B cell (primary cell): ENCODE measurements at regions of chr2 and their contacts with region 1.

Region 1: GRCh38 chr2:208189810-208190503 is at the start of gene C2orf80:
- DNase-seq: no peak
- ATAC-seq: no peak
- H3K4me3 ChIP-seq: no peak within 1 kb of the TSS
- H3K4me3 Mint-ChIP-seq: no peak within 1 kb of the TSS
- H3K27ac ChIP-seq: no peak within 1 kb of the TSS
- H3K27ac Mint-ChIP-seq: no peak within 1 kb of the TSS
- H3K4me1 ChIP-seq: no peaks in the 10 kb centered on the region
- H3K4me1 Mint-ChIP-seq: no peaks in the 10 kb centered on the region
- H3K27me3 ChIP-seq: no peaks in the 10 kb centered on the region
- H3K27me3 Mint-ChIP-seq: peaks cover 9% of the 10 kb centered on the region
- CTCF ChIP-seq: no peak
- total RNA-seq, gene C2orf80: not detected in 2 replicates

Region 2: DNA sequence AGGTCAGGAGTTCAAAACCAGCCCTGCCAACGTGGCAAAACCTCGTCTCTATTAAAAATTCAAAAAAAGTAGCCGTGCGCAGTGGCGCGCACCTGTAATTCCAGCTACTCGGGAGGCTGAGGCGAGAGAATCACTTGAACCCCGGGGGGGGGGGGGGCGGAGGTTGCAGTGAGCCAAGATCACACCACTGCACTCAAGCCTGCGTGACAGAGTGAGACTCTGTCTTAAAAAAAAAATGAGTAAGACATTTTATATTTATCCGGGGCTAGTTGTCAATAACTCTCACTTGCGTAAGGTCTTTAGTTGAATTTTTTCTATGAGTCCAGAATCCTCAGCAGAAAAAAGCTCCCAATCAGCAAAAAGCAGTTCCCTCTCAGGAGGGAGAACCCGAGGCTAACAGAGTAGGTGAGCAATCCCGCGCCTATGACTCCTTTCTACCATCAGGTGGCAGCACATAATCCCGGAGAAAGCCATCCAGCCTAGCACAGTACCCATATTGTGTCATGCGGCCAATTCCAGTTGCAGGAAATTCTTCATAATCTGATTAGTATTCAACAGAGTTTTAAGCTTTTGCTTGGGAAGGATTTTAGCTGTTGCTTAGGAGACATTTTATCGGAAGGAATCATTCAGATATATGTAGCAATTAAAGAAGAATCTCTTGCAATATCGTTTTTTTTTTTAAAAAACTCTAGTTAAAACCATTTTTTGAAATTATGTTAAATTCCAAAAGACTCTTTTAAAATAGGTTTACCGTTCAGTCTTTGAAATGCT is 14.7 kb before region 1 on chr2:
- CTCF ChIA-PET with region 1: interaction called, 12 read pairs
- POLR2A ChIA-PET with region 1: no interaction called
- intact Hi-C with region 1: no loop called
- DNase-seq: peak; percentile 68
- ATAC-seq: peak; percentile 90
- H3K4me3 ChIP-seq: no peak overlapping the region
- H3K4me3 Mint-ChIP-seq: no peak overlapping the region
- H3K27ac ChIP-seq: no peak overlapping the region
- H3K27ac Mint-ChIP-seq: no peak overlapping the region
- H3K4me1 ChIP-seq: no peaks in the 10 kb centered on the region
- H3K4me1 Mint-ChIP-seq: peaks cover 3% of the 10 kb centered on the region
- H3K27me3 ChIP-seq: peaks cover 0 to 5% (median 0%) of the 10 kb centered on the region in 4 experiments
- H3K27me3 Mint-ChIP-seq: peaks cover 21% of the 10 kb centered on the region
- CTCF ChIP-seq: peak; percentile 91